Mammary epithelial cell (primary cell): ENCODE measurements at regions of chr12 and their contacts with region 1.

Region 1: GRCh38 chr12:115916910-115917668 is 360.4 kb downstream of the MED13L start:
- DNase-seq: peak; percentile 53
- H3K4me3 ChIP-seq: peak overlapping the region in 2 of 3 experiments; percentile 31 to 32
- H3K27ac ChIP-seq: no peak overlapping the region
- H3K4me1 ChIP-seq: peaks cover 5% of the 10 kb centered on the region
- H3K27me3 ChIP-seq: no peaks in the 10 kb centered on the region
- CTCF ChIP-seq: peak; percentile 64 to 93

Region 2: GRCh38 chr12:113965951-113966797 is 1950.9 kb before region 1 on chr12 and contains the start of gene RBM19:
- CTCF ChIA-PET with region 1: no interaction called
- dilution Hi-C with region 1: no loop called
- in situ Hi-C with region 1: no loop called
- intact Hi-C with region 1: loop called (anchors 5 kb)
- DNase-seq: peak; percentile 92
- H3K4me3 ChIP-seq: peak within 1 kb of the TSS; percentile 79 to 88 (median 85)
- H3K27ac ChIP-seq: peak within 1 kb of the TSS; percentile 58
- H3K4me1 ChIP-seq: peaks cover 12% of the 10 kb centered on the region
- H3K27me3 ChIP-seq: no peaks in the 10 kb centered on the region
- CTCF ChIP-seq: peak; percentile 78 to 90
- total RNA-seq, gene RBM19: 24.0 to 37.3 TPM

Region 3: DNA sequence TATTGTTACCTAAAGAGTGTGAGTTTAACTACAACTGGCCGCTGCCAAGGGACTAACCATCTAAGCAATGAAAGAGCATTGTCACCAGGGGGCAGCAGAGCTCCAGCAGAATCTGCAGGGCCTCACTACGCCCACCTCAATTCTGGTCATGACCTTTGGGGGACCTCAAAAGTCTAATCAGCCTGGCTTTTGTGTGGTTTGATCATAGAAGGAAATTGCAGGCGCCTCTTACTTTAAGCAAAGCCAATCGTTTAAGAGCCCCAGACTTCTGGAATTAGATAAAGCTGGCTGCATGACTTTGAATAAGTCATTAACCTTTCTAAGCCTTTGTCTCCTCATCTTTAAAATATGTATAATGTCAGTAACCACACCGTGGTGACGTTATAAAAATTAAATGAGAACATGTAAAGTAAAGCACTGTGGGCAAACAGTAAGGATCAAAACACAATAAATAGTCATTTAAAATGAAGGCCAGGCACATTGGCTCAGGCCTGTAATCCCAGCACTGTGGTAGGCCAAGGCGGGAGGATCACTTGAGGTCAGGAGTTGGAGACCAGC is 1291.7 kb before region 1 on chr12:
- CTCF ChIA-PET with region 1: no interaction called
- dilution Hi-C with region 1: no loop called
- in situ Hi-C with region 1: no loop called
- intact Hi-C with region 1: loop called (anchors 1 kb)
- DNase-seq: peak; percentile 26
- H3K4me3 ChIP-seq: no peak overlapping the region
- H3K27ac ChIP-seq: no peak overlapping the region
- H3K4me1 ChIP-seq: peaks cover 3% of the 10 kb centered on the region
- H3K27me3 ChIP-seq: no peaks in the 10 kb centered on the region
- CTCF ChIP-seq: peak; percentile 90 to 93

Region 4: DNA sequence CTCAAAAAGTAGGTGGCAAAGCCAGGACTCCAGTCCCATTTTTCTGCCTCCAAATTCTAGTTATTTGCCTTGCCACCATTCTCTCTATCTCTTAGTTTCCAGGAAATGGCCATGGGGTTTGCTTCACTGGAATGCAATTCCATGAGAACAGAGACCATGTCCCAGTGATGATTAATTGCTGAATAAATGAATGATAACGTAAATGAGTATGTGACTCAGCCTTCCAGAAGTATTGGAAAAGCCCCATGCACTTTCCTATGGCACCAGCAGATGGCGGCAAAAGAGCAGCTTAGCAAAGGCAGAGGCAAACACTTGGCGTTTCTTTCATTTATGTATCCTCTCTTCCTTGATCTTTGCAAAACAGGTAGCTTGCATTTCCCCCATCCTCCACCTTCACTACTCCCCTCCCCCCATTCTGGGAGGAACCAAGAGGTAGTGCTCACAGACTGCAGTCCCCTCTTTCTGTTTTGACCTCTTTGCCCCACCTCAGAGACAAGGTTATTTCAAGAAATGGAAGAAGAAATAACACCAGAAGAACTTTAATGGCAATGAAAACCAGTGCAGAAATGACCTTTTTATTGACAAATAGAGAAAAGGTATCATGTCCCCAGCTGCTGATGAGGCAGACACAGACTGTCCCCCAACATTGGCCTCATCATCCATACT is 1254.4 kb before region 1 on chr12:
- CTCF ChIA-PET with region 1: no interaction called
- dilution Hi-C with region 1: no loop called
- in situ Hi-C with region 1: loop called in 1 of 2 experiments (anchors 5 kb)
- intact Hi-C with region 1: loop called (anchors 1 kb)
- DNase-seq: peak; percentile 78
- H3K4me3 ChIP-seq: no peak overlapping the region
- H3K27ac ChIP-seq: no peak overlapping the region
- H3K4me1 ChIP-seq: peaks cover 4% of the 10 kb centered on the region
- H3K27me3 ChIP-seq: no peaks in the 10 kb centered on the region
- CTCF ChIP-seq: peak; percentile 89 to 95

Region 5: DNA sequence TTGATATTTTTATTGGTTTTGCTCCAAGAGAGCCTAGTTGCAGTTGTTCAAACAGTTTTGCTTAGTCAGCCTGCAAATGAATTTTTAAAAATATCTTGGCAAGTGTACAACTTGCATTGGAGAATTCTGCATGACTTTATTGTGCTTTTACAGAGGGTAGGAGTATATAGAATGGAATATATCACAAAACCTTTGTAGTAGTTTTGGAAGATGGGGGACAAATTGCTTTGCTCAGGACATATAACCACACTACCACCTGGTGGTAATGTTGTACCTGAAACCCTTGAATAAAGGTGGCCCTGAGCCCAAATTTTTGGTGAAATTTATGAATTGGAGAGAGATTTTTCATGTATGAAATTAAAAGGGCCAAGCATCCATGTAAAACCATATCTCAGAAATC is 284.8 kb before region 1 on chr12:
- CTCF ChIA-PET with region 1: no interaction called
- dilution Hi-C with region 1: no loop called
- in situ Hi-C with region 1: loop called in 1 of 2 experiments (anchors 25 kb)
- intact Hi-C with region 1: loop called (anchors 10 kb)
- DNase-seq: peak; percentile 8
- H3K4me3 ChIP-seq: no peak overlapping the region
- H3K27ac ChIP-seq: no peak overlapping the region
- H3K4me1 ChIP-seq: no peaks in the 10 kb centered on the region
- H3K27me3 ChIP-seq: peaks cover 3% of the 10 kb centered on the region
- CTCF ChIP-seq: peak; percentile 23 to 61

Region 6: GRCh38 chr12:115866909-115867525 is 50.1 kb before region 1 on chr12:
- CTCF ChIA-PET with region 1: no interaction called
- dilution Hi-C with region 1: no loop called
- in situ Hi-C with region 1: no loop called
- intact Hi-C with region 1: loop called (anchors 2 kb)
- DNase-seq: no peak
- H3K4me3 ChIP-seq: no peak overlapping the region
- H3K27ac ChIP-seq: no peak overlapping the region
- H3K4me1 ChIP-seq: no peaks in the 10 kb centered on the region
- H3K27me3 ChIP-seq: peaks cover 3% of the 10 kb centered on the region
- CTCF ChIP-seq: peak in 1 of 2 donors; percentile 30

Region 7: DNA sequence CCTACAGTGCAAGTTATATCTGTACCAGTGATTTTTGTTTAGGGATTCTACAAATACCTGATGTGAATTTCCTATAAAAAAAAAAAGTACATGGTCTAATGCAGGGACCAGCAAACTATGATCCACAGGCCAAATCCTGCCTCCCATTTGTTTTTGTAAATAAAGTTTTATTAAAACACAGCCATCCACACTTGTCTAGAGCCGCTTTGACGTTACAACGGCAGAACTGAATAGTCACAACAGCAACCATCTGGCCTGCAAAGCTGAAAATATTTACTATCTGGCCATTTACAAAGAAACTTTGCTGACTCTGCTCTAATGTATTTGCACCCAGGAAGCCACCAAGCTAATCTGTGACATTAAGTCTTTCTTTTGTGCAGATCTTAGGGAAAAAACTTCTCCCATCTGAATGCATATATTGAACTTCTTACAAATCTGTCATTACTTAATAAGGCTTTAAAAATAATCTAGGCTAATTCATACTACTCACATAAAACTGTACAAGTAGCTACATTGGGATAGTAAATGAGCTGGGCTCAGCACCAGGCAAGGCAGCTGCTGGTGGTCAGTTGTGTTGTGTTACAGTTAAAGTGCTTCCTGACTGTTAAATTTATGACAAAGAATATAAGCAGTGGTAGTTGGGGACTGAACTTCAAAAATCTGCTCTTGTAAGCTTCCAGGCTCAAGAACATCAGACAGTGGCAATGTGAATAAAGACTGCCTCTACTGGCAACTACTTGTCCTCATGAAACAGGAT is 57.1 kb after region 1 on chr12:
- CTCF ChIA-PET with region 1: no interaction called
- dilution Hi-C with region 1: no loop called
- in situ Hi-C with region 1: no loop called
- intact Hi-C with region 1: no loop called
- DNase-seq: no peak
- H3K4me3 ChIP-seq: no peak overlapping the region
- H3K27ac ChIP-seq: no peak overlapping the region
- H3K4me1 ChIP-seq: no peaks in the 10 kb centered on the region
- H3K27me3 ChIP-seq: no peaks in the 10 kb centered on the region
- CTCF ChIP-seq: no peak

Region 8: DNA sequence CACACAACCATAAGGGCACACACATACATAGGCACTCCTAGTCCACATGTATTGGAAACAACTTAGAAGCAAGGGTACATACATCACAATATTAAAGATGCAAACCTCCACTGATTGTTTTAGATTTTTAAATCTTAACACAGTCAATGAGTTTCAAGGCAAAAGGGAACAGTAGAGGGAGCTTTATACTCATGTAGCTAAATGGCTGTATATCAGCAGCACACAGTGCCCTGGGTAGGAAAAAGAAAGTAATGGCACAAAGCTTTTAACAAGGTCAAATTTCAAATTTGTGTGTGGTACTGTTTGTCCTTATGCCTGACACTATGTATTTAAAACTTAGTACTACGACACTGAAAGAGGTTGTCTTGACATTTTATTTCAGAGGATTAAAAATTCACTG is 98.4 kb after region 1 on chr12:
- CTCF ChIA-PET with region 1: no interaction called
- dilution Hi-C with region 1: no loop called
- in situ Hi-C with region 1: no loop called
- intact Hi-C with region 1: no loop called
- DNase-seq: peak; percentile 31
- H3K4me3 ChIP-seq: no peak overlapping the region
- H3K27ac ChIP-seq: no peak overlapping the region
- H3K4me1 ChIP-seq: no peaks in the 10 kb centered on the region
- H3K27me3 ChIP-seq: no peaks in the 10 kb centered on the region
- CTCF ChIP-seq: peak; percentile 19 to 56